RWPE1 (cell line): ENCODE measurements at regions of chr9 and their contacts with region 1.

Region 1: DNA sequence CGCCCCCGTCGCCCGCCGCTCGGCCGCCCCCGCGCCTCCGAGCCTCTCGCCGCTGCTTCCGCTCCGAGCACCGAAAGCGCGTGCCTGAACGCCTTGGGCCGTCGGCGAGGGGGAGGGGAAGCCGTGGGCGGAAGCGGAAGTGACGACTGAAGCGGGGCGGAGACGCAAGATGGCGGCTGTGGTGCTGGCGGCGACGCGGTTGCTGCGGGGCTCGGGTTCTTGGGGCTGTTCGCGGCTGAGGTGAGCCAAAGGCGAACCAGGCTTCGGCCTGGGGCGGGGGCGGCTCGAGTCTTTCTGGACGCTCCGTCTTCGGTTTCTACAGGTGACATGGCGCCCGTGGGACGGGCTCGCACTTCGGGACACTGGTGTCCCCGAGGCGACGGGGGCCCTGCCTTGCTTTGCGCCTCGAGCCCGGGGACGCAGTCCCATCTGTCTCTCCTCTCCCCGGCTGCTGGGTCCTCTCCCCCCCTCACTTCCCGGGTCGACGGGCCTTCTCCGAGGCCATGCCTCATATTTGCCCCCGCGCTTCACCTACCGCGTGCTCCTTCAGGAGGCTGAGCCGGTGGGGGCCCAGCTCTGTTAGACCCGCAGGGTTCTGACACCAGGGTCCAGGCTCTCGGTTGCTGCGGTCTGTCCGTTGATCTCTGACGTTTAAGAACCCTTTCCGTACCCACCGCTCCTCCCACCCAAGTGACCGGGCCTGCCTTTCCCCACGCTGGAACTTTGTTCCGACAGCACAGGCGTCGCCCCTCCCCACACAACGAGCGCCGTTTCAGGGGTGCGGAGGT is at the starts of genes ENTR1 and PMPCA:
- DNase-seq: peak; percentile 99
- H3K27ac ChIP-seq: peak within 1 kb of the TSS; percentile 78
- CTCF ChIP-seq: no peak

Region 2: DNA sequence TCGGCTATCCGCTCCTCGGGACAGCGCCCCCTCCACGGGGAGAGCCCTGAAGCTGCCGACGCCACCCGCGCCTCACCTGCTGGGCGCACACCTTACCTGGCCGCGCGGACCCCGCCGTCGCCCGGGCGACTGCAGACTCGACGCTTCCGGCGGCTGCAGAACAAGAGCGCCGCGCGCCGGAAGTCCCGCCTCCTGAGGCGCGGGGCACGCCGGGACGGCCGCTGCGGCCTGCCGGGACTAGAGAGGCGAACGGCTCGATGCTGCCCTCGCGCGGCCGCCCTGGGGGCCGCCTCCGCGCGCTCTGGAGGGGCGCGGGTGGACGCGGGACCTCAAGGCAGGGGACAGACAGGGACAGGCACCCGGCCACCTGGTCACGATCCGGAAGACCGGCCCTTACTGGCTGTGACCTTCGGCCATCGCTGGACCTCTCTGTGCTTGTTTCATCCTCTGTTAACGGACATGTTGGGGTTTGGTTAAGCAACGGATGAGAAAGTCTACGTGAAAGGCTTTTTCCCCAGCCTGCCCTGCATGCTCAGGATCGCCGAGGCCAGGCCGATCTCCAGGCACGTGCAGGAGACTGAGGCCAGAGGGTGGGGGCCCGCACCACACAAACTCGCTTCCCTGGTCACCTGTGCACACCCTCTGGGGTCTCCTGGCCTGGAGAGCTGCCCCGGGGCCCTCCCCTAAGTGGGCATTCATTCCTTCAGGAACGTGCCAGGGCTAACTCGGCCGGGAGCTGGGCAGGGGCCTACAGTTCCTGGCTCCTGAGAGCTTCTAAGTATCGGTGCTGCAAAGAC is 10.5 kb before region 1 on chr9 and contains the start of gene SNAPC4:
- CTCF ChIA-PET with region 1: interaction called, 18 read pairs
- POLR2A ChIA-PET with region 1: interaction called, 4 read pairs
- DNase-seq: peak; percentile 95
- H3K27ac ChIP-seq: peak within 1 kb of the TSS; percentile 79
- CTCF ChIP-seq: peak; percentile 100